ENCODE measurements at regions of chr16 and their contacts with region 1.

Region 1: DNA sequence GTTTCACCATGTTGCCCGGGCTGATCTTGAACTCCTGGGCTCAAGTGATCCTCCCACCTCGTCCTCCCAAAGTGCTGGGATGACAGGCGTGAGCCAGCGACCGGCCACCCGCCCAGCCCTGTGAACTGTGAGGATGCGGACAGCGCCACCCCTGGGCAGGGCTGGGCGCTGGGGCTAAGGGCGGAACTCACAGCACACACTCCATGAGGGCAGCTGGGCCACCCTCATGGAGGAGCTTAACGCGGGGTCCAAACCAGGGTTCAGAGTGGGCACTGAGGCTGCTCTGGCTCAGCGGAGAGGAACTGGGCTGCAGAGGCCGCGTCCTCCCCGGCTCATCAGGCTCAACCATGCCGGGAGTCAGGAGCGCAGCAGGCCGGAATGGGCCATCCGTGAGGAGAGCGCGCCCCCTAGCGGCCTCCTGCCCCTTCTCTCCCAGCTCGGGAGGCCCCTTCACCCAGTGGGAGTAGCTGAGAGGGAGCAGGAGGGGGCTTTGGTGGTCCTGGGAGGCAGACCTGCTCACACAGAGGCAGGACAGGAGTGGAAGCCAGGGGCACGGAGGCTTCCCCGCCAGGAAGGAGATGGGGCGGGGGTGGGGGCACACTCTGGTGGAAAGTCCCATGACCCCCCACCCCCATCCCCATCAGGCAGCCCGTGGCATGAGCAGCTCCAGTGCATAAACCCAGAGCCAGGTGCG is 13.8 kb downstream of the CORO7 start:
- DNase-seq: peak; percentile 37
- H3K4me3 ChIP-seq: no peak overlapping the region
- H3K27ac ChIP-seq: no peak overlapping the region
- H3K27me3 ChIP-seq: no peaks in the 10 kb centered on the region
- CTCF ChIP-seq: peak; percentile 79

Region 2: GRCh38 chr16:4200000-4200780 is 202.4 kb before region 1 on chr16:
- CTCF ChIA-PET with region 1: interaction called, 14 read pairs
- POLR2A ChIA-PET with region 1: interaction called, 3 read pairs
- DNase-seq: peak; percentile 36
- H3K4me3 ChIP-seq: no peak overlapping the region
- H3K27ac ChIP-seq: no peak overlapping the region
- H3K27me3 ChIP-seq: no peaks in the 10 kb centered on the region
- CTCF ChIP-seq: peak; percentile 88

Region 3: DNA sequence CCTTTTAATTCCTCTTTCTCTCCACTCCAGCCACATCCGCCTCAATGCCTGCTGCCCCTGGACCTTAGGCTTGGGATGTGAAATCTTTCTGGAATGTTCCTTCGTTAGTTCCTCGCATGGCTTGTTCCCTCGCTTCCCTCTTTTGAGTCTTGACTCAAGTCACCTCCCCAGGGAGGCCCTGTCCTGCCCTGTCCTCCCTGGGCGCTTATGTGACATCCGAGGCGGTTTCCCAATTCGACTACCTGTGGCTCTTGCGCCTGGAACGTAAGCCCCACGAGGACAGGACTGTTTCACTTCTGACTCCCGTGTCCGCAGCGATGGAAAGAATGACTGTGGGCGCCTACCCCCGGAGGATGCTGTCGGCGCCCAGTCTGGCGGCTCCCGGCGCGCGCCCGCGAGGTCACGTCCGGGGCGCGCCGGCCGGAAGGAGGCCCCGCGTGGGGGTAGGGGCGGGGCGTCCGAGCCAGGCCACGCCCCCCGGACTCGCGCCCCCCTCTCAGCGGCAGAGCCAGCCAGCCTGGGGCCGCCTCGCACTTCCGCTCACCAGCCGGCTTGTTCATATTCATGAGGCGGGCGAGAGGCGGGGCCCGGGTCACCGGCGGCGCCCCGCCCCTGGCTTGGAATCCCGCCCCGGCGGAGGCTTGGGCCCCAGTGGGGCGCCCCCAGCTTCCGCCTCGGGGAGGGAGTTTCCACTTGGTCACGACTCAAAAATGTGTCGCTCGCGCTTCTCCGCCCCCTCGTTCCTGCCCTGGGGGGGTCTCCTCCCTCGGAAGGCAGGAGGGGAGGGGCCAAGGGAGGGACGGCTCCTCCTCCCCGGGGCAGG is 95.2 kb before region 1 on chr16:
- CTCF ChIA-PET with region 1: interaction called, 10 read pairs
- POLR2A ChIA-PET with region 1: no interaction called
- DNase-seq: peak; percentile 88
- H3K4me3 ChIP-seq: peak overlapping the region; percentile 68
- H3K27ac ChIP-seq: peak overlapping the region; percentile 65
- H3K27me3 ChIP-seq: no peaks in the 10 kb centered on the region
- CTCF ChIP-seq: no peak

Region 4: GRCh38 chr16:4339909-4340308 is 62.7 kb before region 1 on chr16:
- CTCF ChIA-PET with region 1: interaction called, 27 read pairs
- POLR2A ChIA-PET with region 1: no interaction called
- DNase-seq: peak; percentile 32
- H3K4me3 ChIP-seq: no peak overlapping the region
- H3K27ac ChIP-seq: no peak overlapping the region
- H3K27me3 ChIP-seq: no peaks in the 10 kb centered on the region
- CTCF ChIP-seq: peak; percentile 39

Region 5: GRCh38 chr16:4350787-4351659 is 51.6 kb before region 1 on chr16 and contains the start of gene PAM16:
- CTCF ChIA-PET with region 1: interaction called, 56 read pairs
- POLR2A ChIA-PET with region 1: interaction called, 6 read pairs
- DNase-seq: peak; percentile 82
- H3K4me3 ChIP-seq: peak within 1 kb of the TSS; percentile 89
- H3K27ac ChIP-seq: peak within 1 kb of the TSS; percentile 52
- H3K27me3 ChIP-seq: no peaks in the 10 kb centered on the region
- CTCF ChIP-seq: peak; percentile 1; the same call in 1 of the 2 replicates
- polyA plus RNA-seq, gene PAM16: 18.4 and 23.8 TPM in 2 replicates

Region 6: GRCh38 chr16:4358831-4359561 is 43.6 kb before region 1 on chr16:
- CTCF ChIA-PET with region 1: interaction called, 132 read pairs
- POLR2A ChIA-PET with region 1: interaction called, 3 read pairs
- DNase-seq: no peak
- H3K4me3 ChIP-seq: no peak overlapping the region
- H3K27ac ChIP-seq: no peak overlapping the region
- H3K27me3 ChIP-seq: no peaks in the 10 kb centered on the region
- CTCF ChIP-seq: peak; percentile 86

Region 7: GRCh38 chr16:4371357-4372000 is 31.1 kb before region 1 on chr16 and contains the start of gene VASN:
- CTCF ChIA-PET with region 1: interaction called, 78 read pairs
- POLR2A ChIA-PET with region 1: interaction called, 3 read pairs
- DNase-seq: no peak
- H3K4me3 ChIP-seq: peak within 1 kb of the TSS; percentile 97
- H3K27ac ChIP-seq: peak within 1 kb of the TSS; percentile 96
- H3K27me3 ChIP-seq: no peaks in the 10 kb centered on the region
- CTCF ChIP-seq: no peak
- polyA plus RNA-seq, gene VASN: 19.1 and 27.8 TPM in 2 replicates

Region 8: GRCh38 chr16:4539716-4540284 is 137.2 kb after region 1 on chr16:
- CTCF ChIA-PET with region 1: no interaction called
- POLR2A ChIA-PET with region 1: no interaction called
- DNase-seq: no peak
- H3K4me3 ChIP-seq: no peak overlapping the region
- H3K27ac ChIP-seq: no peak overlapping the region
- H3K27me3 ChIP-seq: peaks cover 12% of the 10 kb centered on the region
- CTCF ChIP-seq: no peak

Measured in AG04450 (cell line).